ENCODE measurements at regions of chr12 and their contacts with region 1.

Region 1: GRCh38 chr12:32455607-32456071 is 56.3 kb downstream of the FGD4 start:
- DNase-seq: no peak
- ATAC-seq: peak; percentile 75 to 92 (median 78)
- H3K4me3 ChIP-seq: peak overlapping the region; percentile 63
- H3K27ac ChIP-seq: peak overlapping the region; percentile 57
- H3K4me1 ChIP-seq: peaks cover 34% of the 10 kb centered on the region
- H3K27me3 ChIP-seq: no peaks in the 10 kb centered on the region
- CTCF ChIP-seq: peak; percentile 77

Region 2: DNA sequence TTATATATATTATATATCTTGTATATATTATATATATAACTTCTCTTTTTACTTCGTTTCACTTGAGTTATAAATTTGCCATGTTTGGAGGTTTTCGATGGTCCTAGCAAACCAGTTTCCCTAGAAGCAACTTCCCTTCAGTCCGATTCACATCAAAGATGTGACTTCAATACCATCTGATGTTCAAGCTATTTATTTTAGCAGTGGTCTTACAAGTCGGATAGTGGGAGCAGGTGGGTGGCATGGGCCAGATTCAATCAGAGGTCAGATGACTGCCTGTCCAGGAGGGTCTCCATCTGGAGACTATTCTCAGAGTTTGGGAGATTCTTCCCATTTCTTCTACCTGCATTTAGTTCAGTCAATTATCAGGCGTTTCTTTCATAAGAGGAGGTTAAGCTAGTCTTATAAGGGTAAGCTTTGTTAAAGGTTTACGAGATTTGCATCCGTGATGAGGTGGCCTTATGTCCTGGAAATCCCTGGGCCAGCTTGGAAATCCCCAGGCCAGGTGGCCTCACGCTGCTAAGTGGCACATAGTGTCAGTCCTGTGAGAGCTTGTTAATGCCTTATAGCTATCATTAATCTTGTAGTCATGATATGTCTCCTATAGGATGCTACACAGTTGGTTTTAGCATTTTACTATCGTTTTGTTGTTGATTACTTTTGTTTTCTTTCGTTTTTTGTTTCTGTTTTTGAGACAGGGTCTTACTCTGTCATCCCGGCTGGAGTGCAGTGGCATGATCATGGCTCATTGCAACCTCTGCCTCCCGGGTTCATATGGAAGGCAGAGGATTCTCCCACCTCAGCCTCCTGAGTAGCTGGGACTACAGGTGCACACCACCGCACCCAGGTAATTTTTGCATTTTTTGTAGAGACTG is 203.2 kb before region 1 on chr12:
- intact Hi-C with region 1: no loop called
- DNase-seq: no peak
- ATAC-seq: no peak
- H3K4me3 ChIP-seq: no peak overlapping the region
- H3K27ac ChIP-seq: no peak overlapping the region
- H3K4me1 ChIP-seq: no peaks in the 10 kb centered on the region
- H3K27me3 ChIP-seq: no peaks in the 10 kb centered on the region
- CTCF ChIP-seq: no peak

Region 3: GRCh38 chr12:32558903-32559302 is 103.3 kb after region 1 on chr12:
- intact Hi-C with region 1: loop called (anchors 5 to 10 kb)
- DNase-seq: no peak
- ATAC-seq: peak in 2 of 4 donors; percentile 17 to 42
- H3K4me3 ChIP-seq: peak overlapping the region; percentile 45
- H3K27ac ChIP-seq: peak overlapping the region; percentile 80
- H3K4me1 ChIP-seq: peaks cover 38% of the 10 kb centered on the region
- H3K27me3 ChIP-seq: no peaks in the 10 kb centered on the region
- CTCF ChIP-seq: no peak

Region 4: GRCh38 chr12:32568241-32568640 is 112.6 kb after region 1 on chr12:
- intact Hi-C with region 1: loop called in 1 of 2 experiments (anchors 10 kb)
- DNase-seq: no peak
- ATAC-seq: peak in 3 of 4 donors; percentile 53 to 73 (median 72)
- H3K4me3 ChIP-seq: no peak overlapping the region
- H3K27ac ChIP-seq: peak overlapping the region; percentile 53
- H3K4me1 ChIP-seq: peaks cover 33% of the 10 kb centered on the region
- H3K27me3 ChIP-seq: no peaks in the 10 kb centered on the region
- CTCF ChIP-seq: no peak

Region 5: GRCh38 chr12:32671930-32672780 is 216.5 kb after region 1 on chr12:
- intact Hi-C with region 1: loop called (anchors 2 to 5 kb)
- DNase-seq: no peak
- ATAC-seq: peak; percentile 86 to 96 (median 90)
- H3K4me3 ChIP-seq: no peak overlapping the region
- H3K27ac ChIP-seq: no peak overlapping the region
- H3K4me1 ChIP-seq: peaks cover 7% of the 10 kb centered on the region
- H3K27me3 ChIP-seq: no peaks in the 10 kb centered on the region
- CTCF ChIP-seq: peak; percentile 63